ENCODE measurements at regions of chr17 and their contacts with region 1.

Region 1: GRCh38 chr17:51120739-51121617 is at the start of gene SPAG9:
- DNase-seq: peak; percentile 96
- H3K4me3 Mint-ChIP-seq: peak within 1 kb of the TSS; percentile 96
- H3K27ac Mint-ChIP-seq: peak within 1 kb of the TSS; percentile 100
- H3K4me1 Mint-ChIP-seq: peaks cover 30% of the 10 kb centered on the region
- H3K27me3 Mint-ChIP-seq: no peaks in the 10 kb centered on the region
- CTCF ChIP-seq: no peak
- total RNA-seq, gene SPAG9: 78.5 and 93.9 TPM in 2 replicates

Region 2: DNA sequence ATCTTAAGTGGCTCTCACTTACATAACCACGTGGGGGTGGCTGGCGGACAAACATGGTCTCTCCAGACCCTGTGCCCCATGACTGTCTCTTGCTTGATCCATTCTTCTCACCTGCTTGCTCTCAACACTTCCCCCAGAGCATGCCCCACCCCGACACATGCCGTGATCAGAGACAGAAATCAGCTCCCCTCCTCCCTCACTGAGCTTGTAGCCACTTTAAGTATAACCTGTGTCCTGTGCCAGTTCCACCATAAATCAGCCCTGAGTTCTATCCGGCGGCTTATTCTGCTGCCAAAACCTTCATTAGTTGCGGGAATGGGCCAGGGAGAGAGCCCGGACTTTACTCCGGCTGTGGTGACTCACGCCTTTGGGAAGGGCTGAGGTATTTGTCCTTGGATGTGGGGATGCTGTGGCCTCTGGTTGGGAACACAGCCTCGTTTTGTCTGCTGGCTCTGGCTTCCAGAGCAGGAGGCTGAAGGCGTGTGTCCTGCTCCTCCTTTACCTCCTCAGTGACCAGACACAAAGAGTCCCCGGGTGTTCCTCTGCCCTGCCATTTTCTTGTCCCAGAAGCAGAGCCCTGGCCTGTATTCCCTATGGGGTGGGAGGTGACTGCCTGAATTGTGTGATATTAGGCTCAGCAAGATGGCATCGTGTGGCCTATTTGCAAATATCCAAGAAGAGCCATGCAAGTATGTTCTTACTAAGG is 434.3 kb before region 1 on chr17:
- CTCF ChIA-PET with region 1: no interaction called
- POLR2A ChIA-PET with region 1: no interaction called
- intact Hi-C with region 1: no loop called
- DNase-seq: peak; percentile 96
- H3K4me3 Mint-ChIP-seq: peak overlapping the region; percentile 11
- H3K27ac Mint-ChIP-seq: peak overlapping the region; percentile 37
- H3K4me1 Mint-ChIP-seq: peaks cover 40% of the 10 kb centered on the region
- H3K27me3 Mint-ChIP-seq: no peaks in the 10 kb centered on the region
- CTCF ChIP-seq: no peak

Region 3: DNA sequence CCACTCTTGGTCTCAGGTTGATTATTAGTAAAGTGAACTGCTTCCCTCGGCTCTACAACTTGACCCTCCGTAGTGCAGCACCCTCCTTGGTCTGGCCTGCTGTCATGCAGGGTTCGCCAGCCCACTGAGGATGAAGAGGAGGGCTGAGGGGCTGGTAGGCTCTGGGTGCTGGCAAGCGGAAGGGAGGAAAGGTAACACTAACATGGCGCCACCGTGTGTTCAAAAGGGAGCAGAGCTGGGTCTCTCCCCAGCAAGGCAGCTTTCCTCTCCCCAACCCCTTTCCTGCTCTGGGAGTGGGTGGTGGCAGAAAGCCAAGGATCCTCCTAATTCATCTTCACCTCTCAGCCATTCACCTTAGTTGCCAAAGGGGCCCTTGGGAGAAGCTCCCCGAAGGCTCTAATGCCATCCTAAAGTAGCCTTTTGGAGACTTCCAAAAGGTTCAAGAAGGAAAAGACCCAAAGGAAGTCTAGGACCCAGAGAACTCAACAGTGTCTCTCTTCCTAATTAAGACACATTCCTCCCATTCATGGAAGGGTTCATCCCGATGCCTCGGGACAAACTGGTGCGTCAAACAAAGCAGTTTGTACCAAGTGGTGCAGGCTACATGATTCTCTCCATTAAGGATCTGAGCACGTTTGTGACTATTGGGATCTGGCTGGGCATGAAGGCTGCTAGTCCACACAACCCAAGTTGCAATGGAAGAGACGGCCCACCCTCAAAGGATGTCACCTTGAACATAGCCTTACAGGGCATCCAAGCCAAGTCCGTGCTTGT is 164.0 kb before region 1 on chr17:
- CTCF ChIA-PET with region 1: no interaction called
- POLR2A ChIA-PET with region 1: interaction called, 12 read pairs
- intact Hi-C with region 1: no loop called
- DNase-seq: peak; percentile 72
- H3K4me3 Mint-ChIP-seq: no peak overlapping the region
- H3K27ac Mint-ChIP-seq: no peak overlapping the region
- H3K4me1 Mint-ChIP-seq: peaks cover 32% of the 10 kb centered on the region
- H3K27me3 Mint-ChIP-seq: no peaks in the 10 kb centered on the region
- CTCF ChIP-seq: peak; percentile 64

Region 4: DNA sequence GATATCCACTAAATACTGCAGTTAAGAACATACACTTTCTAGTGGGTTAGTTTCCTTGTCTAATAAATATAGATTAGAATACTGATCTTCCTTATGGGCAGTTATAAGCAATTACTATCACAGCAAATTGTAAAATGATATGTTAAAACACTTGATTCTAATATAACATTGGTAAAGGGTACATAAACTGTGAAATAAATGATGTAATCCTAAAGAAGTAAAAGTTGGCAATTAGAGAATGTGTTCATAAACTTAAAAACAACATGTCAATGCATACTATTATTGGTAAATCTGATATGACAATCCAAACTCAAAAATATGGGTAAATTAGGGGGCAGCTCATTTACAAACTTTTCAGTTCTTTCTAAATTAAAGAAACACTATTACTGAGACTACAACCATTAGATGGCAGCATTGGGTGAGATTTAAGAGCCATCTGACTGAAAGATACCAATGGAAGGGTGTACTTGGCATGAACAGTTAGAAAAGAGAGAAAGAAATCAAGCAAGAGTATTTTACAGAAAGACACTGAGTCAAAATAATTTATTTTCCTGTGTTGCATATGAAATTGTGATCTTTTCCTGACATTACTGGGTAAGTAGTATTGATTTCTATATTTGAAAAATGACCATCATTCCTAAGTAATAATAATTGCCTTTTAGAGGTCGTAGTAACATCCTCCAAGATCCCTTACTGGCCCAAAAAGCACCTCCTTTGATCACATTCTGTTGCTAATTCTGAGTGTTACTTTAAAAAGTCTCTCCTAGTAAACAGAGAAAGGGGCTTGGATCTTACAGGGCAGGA is 119.9 kb before region 1 on chr17:
- CTCF ChIA-PET with region 1: interaction called, 6 read pairs
- POLR2A ChIA-PET with region 1: interaction called, 6 read pairs
- intact Hi-C with region 1: loop called (anchors 1 kb)
- DNase-seq: peak; percentile 69
- H3K4me3 Mint-ChIP-seq: no peak overlapping the region
- H3K27ac Mint-ChIP-seq: no peak overlapping the region
- H3K4me1 Mint-ChIP-seq: no peaks in the 10 kb centered on the region
- H3K27me3 Mint-ChIP-seq: no peaks in the 10 kb centered on the region
- CTCF ChIP-seq: peak; percentile 55

Region 5: GRCh38 chr17:51085185-51085805 is 35.7 kb before region 1 on chr17:
- CTCF ChIA-PET with region 1: interaction called, 4 read pairs
- POLR2A ChIA-PET with region 1: interaction called, 16 read pairs
- intact Hi-C with region 1: no loop called
- DNase-seq: peak; percentile 14
- H3K4me3 Mint-ChIP-seq: no peak overlapping the region
- H3K27ac Mint-ChIP-seq: peak overlapping the region; percentile 46
- H3K4me1 Mint-ChIP-seq: no peaks in the 10 kb centered on the region
- H3K27me3 Mint-ChIP-seq: no peaks in the 10 kb centered on the region
- CTCF ChIP-seq: no peak

Region 6: DNA sequence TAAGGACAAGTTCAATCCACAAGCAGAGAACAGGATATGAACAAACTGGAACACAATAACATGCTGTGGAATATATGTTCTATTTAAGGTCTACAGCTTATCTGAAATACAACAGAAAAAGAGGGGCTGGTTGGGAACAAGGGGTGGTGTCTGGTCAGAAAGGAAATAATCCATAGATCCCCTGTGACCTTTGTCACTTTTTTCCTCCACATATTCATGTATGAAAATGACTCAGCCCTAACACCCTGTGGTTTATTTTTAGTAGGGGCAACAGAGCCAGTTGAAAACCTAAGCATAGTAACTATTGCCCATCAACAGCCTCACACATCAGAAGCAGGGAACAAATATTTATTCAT is 12.0 kb after region 1 on chr17:
- CTCF ChIA-PET with region 1: no interaction called
- POLR2A ChIA-PET with region 1: interaction called, 28 read pairs
- intact Hi-C with region 1: no loop called
- DNase-seq: no peak
- H3K4me3 Mint-ChIP-seq: no peak overlapping the region
- H3K27ac Mint-ChIP-seq: no peak overlapping the region
- H3K4me1 Mint-ChIP-seq: no peaks in the 10 kb centered on the region
- H3K27me3 Mint-ChIP-seq: no peaks in the 10 kb centered on the region
- CTCF ChIP-seq: no peak

Region 7: DNA sequence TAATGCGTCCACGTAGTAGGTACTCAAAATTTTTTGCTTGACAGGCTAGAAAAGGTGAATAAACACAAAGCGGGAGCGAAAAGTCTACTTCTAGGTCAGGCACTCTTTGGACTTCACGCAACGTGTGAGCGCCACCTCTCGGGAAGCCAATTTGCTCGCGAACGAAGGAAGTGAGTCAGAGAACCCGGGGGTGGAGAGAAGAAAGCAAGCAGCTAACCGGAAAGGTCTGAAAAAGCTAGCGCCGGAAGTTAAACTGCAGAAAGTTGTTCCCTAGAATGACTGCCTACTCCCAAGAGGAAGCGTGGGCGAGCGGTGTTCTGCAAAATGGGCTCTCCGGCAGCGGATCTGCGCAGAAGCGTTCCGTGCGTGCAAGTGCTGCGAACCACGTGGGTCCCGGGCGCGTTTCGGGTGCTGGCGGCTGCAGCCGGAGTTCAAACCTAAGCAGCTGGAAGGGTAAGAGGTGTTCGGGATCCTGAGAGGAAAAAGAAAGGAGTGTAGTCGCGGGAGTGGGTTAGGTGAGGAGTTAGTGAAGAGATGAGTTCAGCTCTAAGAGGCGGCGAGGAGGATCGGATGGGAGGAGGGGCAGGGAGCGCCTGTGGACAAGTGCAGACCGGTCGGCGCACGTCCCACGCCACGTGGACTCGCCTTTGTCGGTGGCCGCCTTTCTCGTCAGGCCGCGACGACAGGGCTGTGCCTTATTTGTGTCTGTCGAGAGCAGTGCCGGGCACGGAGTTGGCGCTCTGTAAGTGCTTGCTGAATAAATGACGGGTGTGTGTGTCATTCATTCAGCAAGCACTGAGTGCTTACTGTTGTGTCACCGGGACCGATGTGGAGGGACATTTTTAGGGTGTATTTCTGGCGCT is 32.5 kb after region 1 on chr17 and contains the start of gene NME1:
- CTCF ChIA-PET with region 1: interaction called, 19 read pairs
- POLR2A ChIA-PET with region 1: interaction called, 145 read pairs
- intact Hi-C with region 1: loop called (anchors 1 kb)
- DNase-seq: peak; percentile 99
- H3K4me3 Mint-ChIP-seq: no peak within 1 kb of the TSS
- H3K27ac Mint-ChIP-seq: no peak within 1 kb of the TSS
- H3K4me1 Mint-ChIP-seq: no peaks in the 10 kb centered on the region
- H3K27me3 Mint-ChIP-seq: no peaks in the 10 kb centered on the region
- CTCF ChIP-seq: peak; percentile 70
- total RNA-seq, gene NME1: 268 and 324 TPM in 2 replicates

Region 8: GRCh38 chr17:51166197-51166986 is 45.4 kb after region 1 on chr17 and contains the start of gene NME2:
- CTCF ChIA-PET with region 1: interaction called, 3 read pairs
- POLR2A ChIA-PET with region 1: interaction called, 29 read pairs
- intact Hi-C with region 1: no loop called
- DNase-seq: peak; percentile 91
- H3K4me3 Mint-ChIP-seq: peak within 1 kb of the TSS; percentile 99
- H3K27ac Mint-ChIP-seq: peak within 1 kb of the TSS; percentile 100
- H3K4me1 Mint-ChIP-seq: peaks cover 30% of the 10 kb centered on the region
- H3K27me3 Mint-ChIP-seq: no peaks in the 10 kb centered on the region
- CTCF ChIP-seq: no peak
- total RNA-seq, gene NME2: 1,004 and 1,033 TPM in 2 replicates

Region 9: GRCh38 chr17:51224402-51225262 is 103.7 kb after region 1 on chr17:
- CTCF ChIA-PET with region 1: no interaction called
- POLR2A ChIA-PET with region 1: no interaction called
- intact Hi-C with region 1: no loop called
- DNase-seq: no peak
- H3K4me3 Mint-ChIP-seq: no peak overlapping the region
- H3K27ac Mint-ChIP-seq: peak overlapping the region; percentile 31
- H3K4me1 Mint-ChIP-seq: no peaks in the 10 kb centered on the region
- H3K27me3 Mint-ChIP-seq: no peaks in the 10 kb centered on the region
- CTCF ChIP-seq: no peak

Region 10: DNA sequence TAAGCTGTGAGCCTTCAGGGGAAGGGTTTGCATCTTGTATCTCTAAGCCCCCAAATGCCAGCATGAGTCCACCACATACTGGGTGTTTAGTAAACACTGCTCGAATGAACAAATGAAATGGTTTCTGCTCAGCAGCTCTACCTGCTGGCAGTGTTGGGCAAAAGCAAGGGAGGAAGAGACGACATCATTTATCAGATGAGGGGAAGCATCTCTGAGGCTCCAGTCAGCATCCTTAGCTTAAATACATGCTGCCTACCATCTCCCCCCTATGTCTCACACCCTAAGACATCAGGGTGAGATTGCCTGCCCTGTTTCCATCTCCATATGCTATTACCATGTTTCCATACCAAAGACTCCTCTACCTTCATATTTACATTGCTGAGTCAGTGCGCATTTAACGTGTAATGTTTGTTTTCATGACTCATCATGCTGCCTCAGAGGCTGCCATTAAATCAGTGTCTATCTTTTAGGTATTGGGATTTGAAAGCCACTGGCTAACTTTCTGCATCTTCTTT is 519.2 kb after region 1 on chr17:
- CTCF ChIA-PET with region 1: no interaction called
- POLR2A ChIA-PET with region 1: no interaction called
- intact Hi-C with region 1: no loop called
- DNase-seq: peak; percentile 69
- H3K4me3 Mint-ChIP-seq: no peak overlapping the region
- H3K27ac Mint-ChIP-seq: no peak overlapping the region
- H3K4me1 Mint-ChIP-seq: peaks cover 22% of the 10 kb centered on the region
- H3K27me3 Mint-ChIP-seq: peaks cover 10% of the 10 kb centered on the region
- CTCF ChIP-seq: peak; percentile 41